Left colon (tissue), 2 donors: ENCODE measurements at regions of chr12 and their contacts with region 1.

Region 1: GRCh38 chr12:48795480-48796455 is 6.9 kb upstream of the ADCY6 start:
- DNase-seq: peak; percentile 78 to 82
- ATAC-seq: peak; percentile 86

Region 2: GRCh38 chr12:48640854-48641253 is 154.9 kb before region 1 on chr12:
- intact Hi-C with region 1: no loop called
- DNase-seq: no peak
- ATAC-seq: no peak

Region 3: GRCh38 chr12:48750769-48751735 is 44.7 kb before region 1 on chr12:
- intact Hi-C with region 1: loop called (anchors 2 to 5 kb)
- DNase-seq: no peak
- ATAC-seq: peak; percentile 36

Region 4: DNA sequence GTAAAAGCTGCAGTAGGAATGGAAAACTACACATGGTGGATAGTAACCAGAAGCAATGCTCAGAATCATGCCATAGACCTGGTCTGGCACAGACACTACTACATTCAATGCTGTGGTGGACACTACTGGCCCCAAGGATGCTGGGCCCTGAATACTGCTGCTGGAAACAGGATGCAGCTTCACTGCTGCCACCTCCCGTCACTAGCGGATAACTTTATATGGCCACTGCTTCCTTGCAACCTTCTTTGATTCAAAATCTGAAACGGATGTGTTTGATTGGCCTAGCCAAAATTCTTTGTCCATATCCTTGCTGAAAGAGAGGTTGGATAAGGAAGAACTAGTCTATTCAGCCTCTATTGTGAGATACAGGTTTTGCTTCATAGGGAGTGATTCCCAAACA is 37.5 kb before region 1 on chr12:
- intact Hi-C with region 1: loop called (anchors 2 to 5 kb)
- DNase-seq: no peak
- ATAC-seq: peak; percentile 41

Region 5: DNA sequence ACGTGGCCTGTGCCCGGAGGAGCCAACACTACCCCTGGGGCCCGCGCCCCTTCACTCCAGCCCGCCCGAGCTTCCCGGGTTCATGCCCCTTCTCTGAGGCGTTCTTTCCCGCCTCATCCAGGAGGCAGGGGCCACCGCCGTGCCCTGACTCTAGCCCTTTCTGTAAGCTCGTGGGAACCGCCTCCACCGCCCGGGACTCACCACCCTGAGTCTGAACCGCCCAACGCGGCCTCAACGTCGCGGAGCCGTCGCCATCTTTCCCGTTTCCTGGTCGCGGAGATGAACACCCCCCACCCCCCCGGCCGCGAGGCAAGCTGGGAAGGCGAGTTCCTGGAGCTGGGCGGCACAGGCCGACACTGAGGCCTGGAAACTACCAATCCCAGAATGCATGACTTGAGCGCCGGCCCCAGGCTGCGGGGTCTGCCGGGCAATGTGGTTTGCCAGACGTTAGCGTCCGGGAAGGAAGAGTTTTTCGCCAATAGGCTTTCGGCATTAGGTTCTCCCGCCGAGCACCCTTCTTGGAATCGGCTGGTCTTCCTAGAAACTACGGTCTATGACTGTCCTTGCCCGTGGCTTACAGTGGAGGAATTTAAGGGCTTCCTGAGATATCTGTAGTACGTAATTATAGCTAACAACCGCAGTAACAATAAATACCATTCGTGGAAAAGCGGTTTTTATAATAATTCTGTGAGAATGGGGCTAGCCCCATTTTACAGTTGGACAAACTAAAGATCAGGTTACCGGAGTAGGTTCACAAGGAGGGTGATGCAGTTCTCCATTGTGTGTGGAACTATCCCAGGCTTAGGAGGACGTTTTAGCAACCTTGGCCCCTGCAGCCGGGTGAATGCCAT is 56.3 kb after region 1 on chr12 and contains the start of gene DDX23:
- intact Hi-C with region 1: no loop called
- DNase-seq: peak; percentile 93 to 97
- ATAC-seq: peak; percentile 95
- total RNA-seq, gene DDX23: 74.6 to 79.8 TPM

Region 6: GRCh38 chr12:48957141-48958048 is 161.6 kb after region 1 on chr12 and contains the start of gene ARF3:
- intact Hi-C with region 1: no loop called
- DNase-seq: peak; percentile 96 to 97
- ATAC-seq: peak; percentile 85
- total RNA-seq, gene ARF3: 271 to 304 TPM